ENCODE measurements at regions of chr15 and their contacts with region 1.

Region 1: DNA sequence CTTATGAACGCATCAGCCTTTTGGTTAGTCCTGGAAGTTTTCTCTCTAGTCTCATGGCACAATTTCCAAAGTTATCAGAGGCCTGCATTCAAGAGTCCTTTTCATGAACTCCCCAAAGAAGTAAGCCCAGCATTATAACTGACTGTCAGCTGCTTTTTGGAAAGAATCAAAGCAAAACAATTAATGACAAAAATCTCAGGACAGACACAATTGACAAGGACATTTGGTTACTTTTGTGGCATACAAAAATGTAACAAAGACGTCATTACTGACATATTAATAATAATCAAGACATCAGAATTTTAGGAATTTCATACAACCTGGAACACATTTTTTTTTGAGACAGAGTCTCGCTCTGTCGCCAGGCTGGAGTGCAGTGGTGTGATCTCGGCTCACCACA is 21.2 kb downstream of the KATNBL1 start:
- DNase-seq: no peak
- ATAC-seq: no peak
- H3K4me3 ChIP-seq: no peak overlapping the region
- H3K27ac ChIP-seq: no peak overlapping the region
- H3K4me1 ChIP-seq: no peaks in the 10 kb centered on the region
- H3K27me3 ChIP-seq: no peaks in the 10 kb centered on the region
- CTCF ChIP-seq: no peak

Region 2: DNA sequence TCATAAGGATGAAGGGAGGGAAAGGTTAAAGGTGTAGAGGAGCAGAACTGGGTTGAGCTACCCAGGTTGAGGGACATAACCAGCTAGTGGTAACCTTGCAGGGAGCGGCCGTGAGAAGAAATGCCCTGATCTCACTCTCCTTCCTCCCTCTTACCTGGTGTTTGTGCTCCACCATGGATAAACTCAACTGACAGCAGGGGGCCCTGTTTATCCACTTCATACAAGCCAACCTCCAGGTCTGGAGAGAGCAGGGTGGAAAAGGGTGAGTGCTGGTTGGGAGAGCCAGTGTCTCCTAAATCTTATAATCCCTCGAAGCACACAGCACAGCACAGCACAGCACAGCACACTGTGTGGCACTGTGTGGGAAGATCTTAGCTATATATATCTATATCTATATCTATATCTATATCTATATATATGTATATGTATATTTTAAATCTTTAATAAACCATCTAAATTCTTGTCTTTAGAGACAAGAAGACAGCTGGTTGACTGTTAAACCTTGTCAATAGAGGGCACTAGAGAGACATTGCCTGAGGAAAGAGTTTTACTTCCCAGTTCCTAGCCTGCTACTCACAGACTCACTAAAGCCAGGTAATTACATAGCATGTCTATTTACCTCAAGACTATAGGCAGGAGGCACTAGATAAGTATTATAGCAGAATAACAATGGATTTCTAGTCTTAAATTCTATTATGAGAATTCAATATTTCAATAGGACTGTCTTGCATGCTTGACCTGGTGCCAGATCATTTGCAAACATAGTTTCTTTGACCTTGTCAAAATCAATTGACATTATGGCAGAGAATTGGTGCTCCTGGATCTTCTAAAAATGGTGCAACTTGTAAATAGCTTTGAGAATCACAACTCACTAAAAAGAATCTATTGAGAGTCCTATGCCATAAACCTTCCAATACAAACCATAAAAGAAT is 972.5 kb before region 1 on chr15:
- CTCF ChIA-PET with region 1: no interaction called
- POLR2A ChIA-PET with region 1: interaction called, 14 read pairs
- in situ Hi-C with region 1: no loop called
- intact Hi-C with region 1: no loop called
- DNase-seq: no peak
- ATAC-seq: no peak
- H3K4me3 ChIP-seq: no peak overlapping the region
- H3K27ac ChIP-seq: no peak overlapping the region
- H3K4me1 ChIP-seq: no peaks in the 10 kb centered on the region
- H3K27me3 ChIP-seq: no peaks in the 10 kb centered on the region; the same call in 1 of the 2 replicates
- CTCF ChIP-seq: peak; percentile 69

Region 3: GRCh38 chr15:34223904-34224596 is 35.3 kb after region 1 on chr15:
- CTCF ChIA-PET with region 1: no interaction called
- POLR2A ChIA-PET with region 1: no interaction called
- in situ Hi-C with region 1: no loop called
- intact Hi-C with region 1: no loop called
- DNase-seq: no peak
- ATAC-seq: peak; percentile 23; the same call in 1 of the 2 replicates
- H3K4me3 ChIP-seq: peak overlapping the region; percentile 84 to 97
- H3K27ac ChIP-seq: peak overlapping the region; percentile 89
- H3K4me1 ChIP-seq: peaks cover 4% of the 10 kb centered on the region
- H3K27me3 ChIP-seq: no peaks in the 10 kb centered on the region
- CTCF ChIP-seq: no peak

Region 4: GRCh38 chr15:34241372-34242330 is 52.9 kb after region 1 on chr15:
- CTCF ChIA-PET with region 1: no interaction called
- POLR2A ChIA-PET with region 1: no interaction called
- in situ Hi-C with region 1: no loop called
- intact Hi-C with region 1: no loop called
- DNase-seq: no peak
- ATAC-seq: peak; percentile 85
- H3K4me3 ChIP-seq: no peak overlapping the region
- H3K27ac ChIP-seq: no peak overlapping the region
- H3K4me1 ChIP-seq: no peaks in the 10 kb centered on the region
- H3K27me3 ChIP-seq: no peaks in the 10 kb centered on the region
- CTCF ChIP-seq: peak; percentile 79

Region 5: DNA sequence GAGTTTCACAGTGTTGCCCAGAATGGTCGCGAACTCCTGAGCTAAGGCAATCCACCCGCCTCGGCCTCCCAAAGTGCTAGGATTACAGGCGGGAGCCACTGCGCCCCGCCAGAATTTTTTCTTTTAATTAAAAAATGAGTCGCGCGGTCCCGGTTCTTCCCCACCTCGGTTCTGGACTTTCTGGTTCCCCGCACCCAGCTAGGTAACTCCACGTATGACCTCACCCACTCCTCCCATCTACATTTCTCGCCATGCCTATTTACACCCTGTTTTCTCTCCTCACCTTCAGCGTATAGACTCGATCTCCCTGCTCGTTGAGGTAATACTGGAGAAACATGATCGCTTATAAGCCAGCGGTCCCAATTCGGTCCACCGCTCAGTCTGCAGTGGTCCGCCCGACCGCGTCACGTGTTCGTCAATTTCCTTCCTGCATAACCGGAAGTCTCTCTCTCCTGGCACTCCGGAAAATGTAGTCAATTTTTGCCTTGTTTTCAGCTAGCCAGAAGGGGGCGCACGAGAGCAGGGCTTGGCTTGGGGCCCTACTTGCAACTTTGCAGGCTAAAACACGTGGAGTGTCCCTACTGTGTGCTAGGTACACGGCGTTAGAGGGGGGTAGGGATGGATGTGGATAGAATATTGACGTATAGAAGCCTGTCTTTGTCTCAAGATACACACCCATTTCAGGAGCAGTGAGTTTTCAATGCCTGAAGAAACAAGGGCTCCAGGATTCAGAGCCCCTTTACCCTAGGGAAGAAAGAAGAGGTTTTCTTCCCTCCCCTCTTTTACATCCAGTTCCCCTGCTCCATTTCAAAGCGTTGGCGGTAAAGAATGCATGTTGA is 154.2 kb after region 1 on chr15 and contains the starts of genes NOP10 and NUTM1:
- CTCF ChIA-PET with region 1: no interaction called
- POLR2A ChIA-PET with region 1: no interaction called
- in situ Hi-C with region 1: no loop called
- intact Hi-C with region 1: no loop called
- DNase-seq: peak; percentile 87
- ATAC-seq: peak; percentile 91
- H3K4me3 ChIP-seq: peak within 1 kb of the TSS; percentile 81 to 82
- H3K27ac ChIP-seq: peak within 1 kb of the TSS; percentile 96
- H3K4me1 ChIP-seq: peaks cover 23% of the 10 kb centered on the region
- H3K27me3 ChIP-seq: no peaks in the 10 kb centered on the region
- CTCF ChIP-seq: peak; percentile 99
- total RNA-seq, gene NOP10: 306 TPM
- total RNA-seq, gene NUTM1: 0.05 TPM

Region 6: DNA sequence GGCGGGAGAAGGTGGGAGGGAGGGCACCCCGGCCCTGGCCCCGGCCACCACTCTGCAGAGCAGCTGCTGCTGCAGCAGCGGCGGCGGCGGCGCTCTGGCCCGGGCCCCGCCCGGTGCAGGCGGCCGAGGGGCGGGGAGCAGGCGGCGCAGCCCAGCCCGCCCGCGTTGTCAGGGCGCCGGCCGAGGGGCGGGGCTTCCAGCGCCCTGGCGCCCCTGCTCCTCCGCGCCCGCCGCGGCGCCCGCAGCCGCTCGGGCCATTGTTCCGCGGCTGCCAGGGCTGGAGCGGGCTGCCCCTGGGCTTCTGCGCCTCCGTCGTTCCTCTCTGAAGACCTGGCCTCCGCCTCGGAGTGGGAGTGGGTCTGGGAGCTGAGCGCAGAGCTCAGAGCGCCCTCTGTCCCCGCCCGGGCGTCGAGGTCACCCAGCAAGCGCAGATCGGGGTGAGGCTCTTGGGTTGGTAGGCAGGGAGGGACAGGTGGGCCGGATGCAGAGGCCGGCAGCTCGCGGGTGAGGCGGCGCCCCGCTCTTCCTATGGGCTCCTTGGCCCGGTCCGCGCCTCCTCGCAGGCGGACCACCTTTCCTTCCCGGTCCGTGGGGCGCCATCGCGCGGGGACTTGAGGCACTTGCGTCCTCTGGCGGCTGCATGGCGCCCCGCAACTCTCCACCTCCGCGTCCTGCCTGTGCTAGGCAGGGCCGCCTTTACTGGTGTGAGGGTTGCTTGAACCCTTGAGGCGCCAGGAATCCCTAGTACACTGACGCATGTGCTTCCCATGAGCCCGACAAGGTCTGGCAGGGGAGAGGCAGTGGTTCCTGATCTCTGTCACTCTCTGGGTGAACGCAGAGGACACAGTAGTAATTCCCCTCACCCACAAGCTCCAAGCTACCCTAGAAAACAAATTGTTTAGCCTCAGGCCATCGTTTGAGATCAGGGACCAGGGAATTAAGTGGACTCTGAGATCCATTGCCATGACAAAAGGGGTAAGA is 178.7 kb after region 1 on chr15 and contains the start of gene LPCAT4:
- CTCF ChIA-PET with region 1: no interaction called
- POLR2A ChIA-PET with region 1: no interaction called
- in situ Hi-C with region 1: no loop called
- intact Hi-C with region 1: no loop called
- DNase-seq: peak; percentile 53
- ATAC-seq: peak; percentile 96
- H3K4me3 ChIP-seq: peak within 1 kb of the TSS; percentile 77 to 90
- H3K27ac ChIP-seq: peak within 1 kb of the TSS; percentile 96
- H3K4me1 ChIP-seq: peaks cover 10% of the 10 kb centered on the region; the same call in 1 of the 2 replicates
- H3K27me3 ChIP-seq: no peaks in the 10 kb centered on the region
- CTCF ChIP-seq: peak; percentile 99
- total RNA-seq, gene LPCAT4: 58.5 TPM